Activated CD4-positive, alpha-beta T cell treated with anti-CD3 and anti-CD28 coated beads, Interleukin-2, amount 10 ng/mL, durations not matched to agents 24 days and 14 days (primary cell): ENCODE measurements at regions of chr22 and their contacts with region 1.

Region 1: DNA sequence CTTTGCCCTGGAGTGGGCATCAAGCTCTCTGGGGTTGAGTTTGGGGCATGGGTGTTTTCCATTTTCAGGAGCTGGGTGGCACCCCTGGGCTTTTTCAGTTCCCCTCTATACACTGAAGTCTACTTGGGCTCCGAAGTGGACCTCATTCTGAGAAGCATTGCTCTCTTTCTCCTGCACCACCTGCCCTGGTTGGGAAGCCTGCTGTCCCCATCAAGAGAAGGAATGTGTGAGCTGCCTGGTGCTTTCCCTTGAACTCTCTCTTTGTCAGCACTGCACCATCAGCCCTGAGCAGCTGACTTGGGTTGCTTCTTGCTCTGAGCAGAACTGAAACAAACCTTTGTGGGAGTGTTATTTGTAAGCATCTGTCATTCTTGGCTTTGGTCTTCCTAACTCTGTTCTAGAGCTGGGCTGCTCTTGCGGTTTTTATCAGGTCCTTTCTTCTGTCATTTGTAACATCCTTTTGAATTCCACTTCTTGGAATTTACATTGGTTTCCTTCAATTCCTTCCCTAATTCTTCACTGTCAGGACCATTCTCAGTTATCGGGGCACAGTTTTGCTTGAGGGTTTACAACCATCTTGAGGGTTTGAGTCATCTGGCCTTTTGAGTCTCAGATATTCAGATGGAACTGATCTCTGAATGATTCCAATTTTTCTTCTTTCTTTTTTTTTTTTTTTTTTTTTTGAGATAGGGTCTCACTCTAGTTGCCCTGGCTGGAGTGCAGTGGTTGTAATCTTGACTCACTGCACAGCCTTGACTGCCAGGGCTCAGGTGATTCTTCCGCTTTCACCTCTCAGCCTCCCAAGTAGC is 20.5 kb downstream of the UBE2L3 start:
- DNase-seq: peak; percentile 80
- H3K4me3 Mint-ChIP-seq: peak overlapping the region; percentile 27
- H3K27ac Mint-ChIP-seq: peak overlapping the region; percentile 84
- H3K4me1 Mint-ChIP-seq: peaks cover 36% of the 10 kb centered on the region
- H3K27me3 Mint-ChIP-seq: no peaks in the 10 kb centered on the region

Region 2: DNA sequence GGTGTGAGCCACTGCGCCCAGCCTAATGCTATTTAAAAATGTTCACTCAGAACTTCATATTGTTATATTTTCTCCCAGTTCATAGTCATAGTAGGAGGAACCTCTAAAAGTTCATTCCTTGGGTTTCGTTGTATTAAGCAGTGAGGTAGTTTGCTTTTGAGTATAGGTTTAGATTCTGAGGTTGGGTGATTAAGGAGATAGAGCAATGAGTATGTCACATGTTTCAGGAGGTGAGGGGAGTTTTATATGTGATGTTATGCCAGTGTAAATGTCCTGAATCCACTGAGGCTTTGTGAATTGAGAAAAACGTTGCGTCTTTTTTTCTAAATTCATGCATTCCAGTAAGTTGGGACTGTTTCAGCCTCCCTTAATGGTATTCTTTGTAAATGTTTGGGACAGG is 16.3 kb before region 1 on chr22:
- intact Hi-C with region 1: loop called (anchors 1 kb)
- DNase-seq: no peak
- H3K4me3 Mint-ChIP-seq: peak overlapping the region; percentile 73
- H3K27ac Mint-ChIP-seq: peak overlapping the region; percentile 84
- H3K4me1 Mint-ChIP-seq: peaks cover 42% of the 10 kb centered on the region
- H3K27me3 Mint-ChIP-seq: no peaks in the 10 kb centered on the region

Region 3: DNA sequence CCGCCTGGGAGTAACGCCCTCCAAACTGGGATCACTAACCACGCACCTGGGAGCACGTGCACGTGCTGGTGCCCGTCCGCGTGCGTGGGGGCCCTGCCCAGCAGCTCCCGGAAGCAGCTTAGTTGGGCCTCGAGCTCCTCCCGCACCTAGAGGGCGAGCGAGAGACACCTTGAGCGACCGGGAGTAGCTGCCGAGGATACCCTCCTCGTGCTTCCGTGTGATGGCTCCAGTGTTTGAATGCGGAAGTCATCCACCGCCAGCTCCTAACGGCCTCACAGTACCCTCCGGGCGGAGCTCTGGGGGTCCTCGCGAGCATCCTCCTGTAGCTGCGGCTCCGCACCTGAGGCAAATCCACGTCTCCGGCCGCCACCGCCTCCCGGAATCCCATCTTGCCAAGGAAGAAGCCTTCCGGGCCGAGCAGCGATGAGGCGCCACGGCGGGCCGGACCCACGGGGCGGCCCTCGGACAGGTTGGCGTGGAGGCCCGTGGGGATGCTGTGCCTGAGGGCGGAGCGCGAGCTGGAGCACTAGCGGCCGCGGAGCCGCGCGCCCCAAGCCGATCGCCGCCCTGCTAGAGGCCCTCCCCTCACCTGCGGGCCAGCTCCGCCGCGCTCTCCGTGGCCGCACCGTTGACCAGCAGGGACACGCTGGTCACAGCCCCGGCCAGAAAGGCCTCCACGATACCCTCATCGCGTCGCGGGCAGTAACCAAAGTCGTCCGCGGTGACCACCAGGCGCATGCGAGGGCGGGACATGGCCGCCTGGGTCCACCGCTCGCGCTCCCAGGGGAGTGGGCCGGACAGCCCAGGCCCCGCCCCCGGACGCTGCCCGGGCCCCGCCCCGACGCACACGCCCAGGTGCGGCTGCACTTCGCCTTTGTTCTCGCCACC is 41.5 kb after region 1 on chr22 and contains the start of gene YDJC:
- intact Hi-C with region 1: loop called (anchors 5 kb)
- DNase-seq: peak; percentile 99
- H3K4me3 Mint-ChIP-seq: peak within 1 kb of the TSS; percentile 90
- H3K27ac Mint-ChIP-seq: peak within 1 kb of the TSS; percentile 94
- H3K4me1 Mint-ChIP-seq: peaks cover 39% of the 10 kb centered on the region
- H3K27me3 Mint-ChIP-seq: no peaks in the 10 kb centered on the region
- total RNA-seq, gene YDJC: 54.2 and 56.1 TPM in 2 replicates